Transverse colon (tissue), 4 donors: ENCODE measurements at regions of chr11 and their contacts with region 1.

Region 1: DNA sequence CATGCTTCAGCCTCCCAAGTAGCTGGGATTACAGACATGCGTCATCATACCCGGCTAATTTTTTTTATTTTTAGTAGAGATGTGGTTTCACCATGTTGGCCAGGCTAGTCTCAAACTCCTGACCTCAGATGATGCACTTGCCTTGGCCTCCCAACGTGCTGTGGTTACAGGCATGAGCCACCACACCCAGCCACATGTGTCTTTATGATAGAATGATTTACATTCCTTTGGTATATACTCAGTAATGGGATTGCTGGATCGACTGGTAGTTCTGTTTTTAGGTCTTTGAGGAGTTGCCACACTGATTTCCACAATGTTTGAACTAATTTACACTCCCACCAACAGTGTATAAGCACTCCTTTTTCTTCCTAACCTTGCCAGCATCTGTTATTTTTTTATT is 276.2 kb downstream of the METTL15 start:
- DNase-seq: no peak
- H3K4me3 ChIP-seq: no peak overlapping the region
- H3K27ac ChIP-seq: no peak overlapping the region
- H3K4me1 ChIP-seq: no peaks in the 10 kb centered on the region
- H3K27me3 ChIP-seq: no peaks in the 10 kb centered on the region
- CTCF ChIP-seq: no peak
- EP300 ChIP-seq: no peak
- POLR2A ChIP-seq: no peak

Region 2: DNA sequence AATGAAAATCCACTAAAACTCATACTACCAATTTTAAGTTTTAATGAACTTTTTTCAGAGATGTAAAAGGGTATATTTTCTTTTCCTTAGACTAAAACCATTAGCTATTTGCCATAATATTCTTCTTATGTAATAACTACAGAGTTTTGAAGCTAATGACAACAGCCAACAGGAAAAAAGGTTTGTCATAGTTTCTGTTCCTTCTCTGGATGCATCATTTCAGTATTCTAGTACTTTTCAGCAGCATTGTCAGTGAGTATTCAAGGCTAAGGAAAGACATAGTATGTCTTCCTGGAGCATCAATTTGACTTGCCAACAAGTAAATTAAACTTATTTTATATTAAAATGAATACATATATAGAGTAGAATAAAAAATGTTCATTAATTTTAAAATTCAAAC is 110.2 kb before region 1 on chr11:
- in situ Hi-C with region 1: no loop called
- intact Hi-C with region 1: no loop called
- DNase-seq: no peak
- H3K4me3 ChIP-seq: no peak overlapping the region
- H3K27ac ChIP-seq: no peak overlapping the region
- H3K4me1 ChIP-seq: no peaks in the 10 kb centered on the region
- H3K27me3 ChIP-seq: no peaks in the 10 kb centered on the region
- CTCF ChIP-seq: no peak
- EP300 ChIP-seq: no peak
- POLR2A ChIP-seq: no peak

Region 3: GRCh38 chr11:28476049-28476448 is 91.6 kb after region 1 on chr11:
- in situ Hi-C with region 1: loop called in 1 of 4 experiments (anchors 25 kb)
- intact Hi-C with region 1: no loop called
- DNase-seq: no peak
- H3K4me3 ChIP-seq: no peak overlapping the region
- H3K27ac ChIP-seq: no peak overlapping the region
- H3K4me1 ChIP-seq: no peaks in the 10 kb centered on the region
- H3K27me3 ChIP-seq: no peaks in the 10 kb centered on the region
- CTCF ChIP-seq: no peak
- EP300 ChIP-seq: no peak
- POLR2A ChIP-seq: no peak